ENCODE measurements at regions of chr13 and their contacts with region 1.

Region 1: GRCh38 chr13:99258210-99258860 is at the start of gene GPR18:
- DNase-seq: peak; percentile 61
- H3K4me3 Mint-ChIP-seq: peak within 1 kb of the TSS; percentile 81
- H3K27ac Mint-ChIP-seq: peak within 1 kb of the TSS; percentile 91
- H3K4me1 Mint-ChIP-seq: peaks cover 72% of the 10 kb centered on the region
- H3K27me3 Mint-ChIP-seq: no peaks in the 10 kb centered on the region
- total RNA-seq, gene GPR18: 2.4 TPM

Region 2: GRCh38 chr13:99027260-99027659 is 231.1 kb before region 1 on chr13:
- CTCF ChIA-PET with region 1: interaction called, 4 read pairs
- intact Hi-C with region 1: loop called (anchors 2 kb)
- DNase-seq: peak; percentile 35
- H3K4me3 Mint-ChIP-seq: no peak overlapping the region
- H3K27ac Mint-ChIP-seq: peak overlapping the region; percentile 74
- H3K4me1 Mint-ChIP-seq: peaks cover 88% of the 10 kb centered on the region
- H3K27me3 Mint-ChIP-seq: no peaks in the 10 kb centered on the region

Region 3: DNA sequence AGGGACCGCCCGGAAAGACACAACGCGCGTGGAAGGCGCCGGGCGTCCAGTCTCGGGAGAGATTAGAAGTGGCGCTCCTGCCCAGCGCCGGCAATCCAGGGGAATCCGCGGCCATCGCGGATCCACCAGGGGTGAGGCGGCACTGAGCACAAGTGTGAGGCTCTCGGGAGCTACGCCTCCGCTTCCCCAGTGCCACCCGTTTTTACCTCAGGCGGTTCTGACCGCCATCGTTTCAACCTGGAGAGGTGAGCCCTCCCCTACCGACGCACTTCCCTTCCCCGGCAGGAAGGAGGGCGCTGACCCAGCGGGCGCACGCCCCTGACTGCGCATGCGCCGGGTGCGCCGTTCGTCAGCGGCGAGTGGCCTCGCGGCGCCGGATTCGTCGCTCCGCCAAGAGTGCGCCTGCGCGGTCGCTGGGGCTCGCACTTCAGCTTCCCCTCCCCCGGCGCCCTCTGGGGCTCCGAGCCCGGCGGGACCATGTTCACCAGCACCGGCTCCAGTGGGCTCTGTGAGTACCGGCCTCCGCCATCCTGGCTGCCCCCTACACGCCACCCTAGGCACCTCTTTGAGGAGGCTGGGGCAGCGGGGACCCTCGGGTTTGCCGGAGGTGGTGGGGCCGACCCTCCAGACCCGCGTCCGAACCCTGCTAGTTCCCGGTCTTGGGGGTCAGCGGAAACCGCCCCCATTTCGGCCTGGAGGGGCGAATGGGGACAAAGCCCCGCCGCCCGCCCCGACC is 57.7 kb before region 1 on chr13 and contains the start of gene UBAC2:
- CTCF ChIA-PET with region 1: interaction called, 163 read pairs
- intact Hi-C with region 1: loop called (anchors 1 kb)
- DNase-seq: peak; percentile 95
- H3K4me3 Mint-ChIP-seq: peak within 1 kb of the TSS; percentile 91
- H3K27ac Mint-ChIP-seq: peak within 1 kb of the TSS; percentile 90
- H3K4me1 Mint-ChIP-seq: peaks cover 60% of the 10 kb centered on the region
- H3K27me3 Mint-ChIP-seq: no peaks in the 10 kb centered on the region
- total RNA-seq, gene UBAC2: 43.4 to 44.9 TPM

Region 4: DNA sequence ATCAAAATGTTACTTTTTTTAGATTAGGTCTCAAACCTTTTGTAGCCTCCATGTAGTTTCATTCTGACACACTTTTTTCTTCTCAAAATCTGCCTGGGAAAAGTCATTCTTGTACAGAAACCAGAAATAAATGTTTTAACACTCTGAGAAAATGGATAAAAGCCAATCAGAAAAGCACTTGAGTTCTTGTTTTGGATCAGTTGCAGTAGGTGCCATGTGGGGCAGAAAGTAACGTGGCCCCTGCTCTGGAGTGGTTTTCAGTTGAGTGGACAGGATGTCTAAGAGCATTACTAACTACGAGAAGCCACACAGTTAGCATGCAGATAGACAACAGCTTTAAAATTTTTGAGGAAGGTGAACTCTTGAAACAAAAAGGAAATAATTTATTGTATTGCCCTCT is 29.8 kb after region 1 on chr13:
- CTCF ChIA-PET with region 1: no interaction called
- intact Hi-C with region 1: loop called (anchors 1 kb)
- DNase-seq: peak; percentile 89
- H3K4me3 Mint-ChIP-seq: peak overlapping the region; percentile 37
- H3K27ac Mint-ChIP-seq: peak overlapping the region; percentile 89
- H3K4me1 Mint-ChIP-seq: peaks cover 80% of the 10 kb centered on the region
- H3K27me3 Mint-ChIP-seq: no peaks in the 10 kb centered on the region

Region 5: GRCh38 chr13:99322297-99323103 is 64.2 kb after region 1 on chr13:
- CTCF ChIA-PET with region 1: no interaction called
- intact Hi-C with region 1: loop called (anchors 1 kb)
- DNase-seq: peak; percentile 63
- H3K4me3 Mint-ChIP-seq: peak overlapping the region; percentile 56
- H3K27ac Mint-ChIP-seq: peak overlapping the region; percentile 87
- H3K4me1 Mint-ChIP-seq: peaks cover 75% of the 10 kb centered on the region
- H3K27me3 Mint-ChIP-seq: no peaks in the 10 kb centered on the region

Measured in activated naive CD4-positive, alpha-beta T cell treated with anti-CD3 and anti-CD28 coated beads for 36 hours (primary cell).